ENCODE measurements at regions of chr9 and their contacts with region 1.

Region 1: DNA sequence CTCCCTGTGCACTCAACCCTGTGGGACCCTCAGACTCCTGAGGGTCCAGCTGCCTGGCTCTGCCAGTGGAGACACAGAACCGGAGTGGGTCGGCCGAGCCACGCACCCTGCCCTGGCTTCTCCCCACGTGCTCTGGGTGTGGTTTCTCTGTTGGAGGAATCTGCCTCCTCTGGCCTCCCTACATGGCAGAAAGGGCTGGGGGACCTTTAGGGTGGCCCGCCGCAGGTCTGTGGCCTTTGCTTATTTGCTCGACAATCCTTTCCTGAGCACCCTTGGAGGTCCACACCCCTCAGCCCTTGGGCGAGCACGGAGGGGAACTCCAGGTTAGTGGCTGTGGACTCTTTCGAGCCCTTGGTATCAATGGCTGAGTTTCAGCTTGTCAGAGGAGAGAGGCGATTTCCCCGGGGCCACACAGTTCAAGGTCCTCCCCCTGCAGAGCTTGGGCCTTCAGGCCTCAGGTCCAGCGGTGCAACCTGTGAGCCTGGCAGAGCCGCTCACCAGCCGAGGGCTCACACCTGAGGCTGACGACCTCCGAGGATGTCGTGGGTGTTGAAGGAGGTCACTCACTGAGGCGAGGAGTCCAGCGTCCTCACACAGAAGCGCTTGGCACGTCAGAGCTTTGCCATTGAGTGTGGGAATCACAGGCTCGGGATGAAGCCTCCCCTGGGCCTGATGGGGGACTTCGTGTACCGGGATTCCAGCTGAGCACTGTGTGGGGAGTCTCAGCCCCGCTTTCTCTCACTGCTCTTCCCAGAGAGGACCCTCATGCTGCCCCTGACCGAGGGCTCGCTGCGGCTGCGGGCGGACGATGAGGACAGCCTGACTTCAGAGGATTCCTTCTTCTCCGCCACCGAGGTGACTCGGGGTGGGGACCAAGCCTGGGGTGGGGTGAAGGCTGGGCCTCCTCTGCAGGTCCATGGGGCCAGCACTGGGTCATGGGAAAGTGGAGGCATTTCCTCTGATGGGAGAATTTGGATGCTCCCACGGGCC is 20.8 kb upstream of the DOLPP1 start:
- DNase-seq: no peak

Region 2: DNA sequence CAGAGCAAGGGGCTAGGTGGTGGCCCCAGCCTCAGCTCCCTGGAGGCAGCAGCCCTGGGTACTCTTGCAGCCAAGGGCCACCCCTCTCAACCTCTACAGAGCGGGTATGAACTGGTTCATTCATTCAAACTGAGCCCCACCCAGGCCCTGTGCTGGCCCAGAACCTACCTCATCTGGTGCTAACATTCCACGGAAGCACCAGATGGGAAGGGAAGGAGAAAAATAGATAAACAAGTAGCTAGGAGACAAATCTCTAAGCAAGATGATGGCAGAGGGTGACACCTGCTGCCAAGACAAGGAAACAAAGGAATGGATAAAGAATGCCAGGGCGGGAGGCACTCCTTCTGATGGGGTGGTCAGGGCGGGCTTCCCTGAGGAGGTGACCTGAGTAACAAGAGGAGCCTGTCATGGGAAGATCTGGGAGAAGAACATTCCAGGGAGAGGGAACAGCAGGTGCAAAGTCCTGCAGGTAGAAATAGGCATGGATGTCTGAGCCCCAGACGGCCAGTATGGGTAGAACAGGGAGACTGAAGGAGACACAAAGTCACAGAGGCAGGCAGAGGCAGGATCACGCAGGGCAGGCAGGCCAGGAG is 1149.4 kb before region 1 on chr9:
- intact Hi-C with region 1: loop called in 1 of 2 experiments (anchors 5 kb)
- DNase-seq: no peak

Region 3: GRCh38 chr9:128940271-128940921 is 119.7 kb before region 1 on chr9:
- intact Hi-C with region 1: no loop called
- DNase-seq: peak; percentile 81

Region 4: DNA sequence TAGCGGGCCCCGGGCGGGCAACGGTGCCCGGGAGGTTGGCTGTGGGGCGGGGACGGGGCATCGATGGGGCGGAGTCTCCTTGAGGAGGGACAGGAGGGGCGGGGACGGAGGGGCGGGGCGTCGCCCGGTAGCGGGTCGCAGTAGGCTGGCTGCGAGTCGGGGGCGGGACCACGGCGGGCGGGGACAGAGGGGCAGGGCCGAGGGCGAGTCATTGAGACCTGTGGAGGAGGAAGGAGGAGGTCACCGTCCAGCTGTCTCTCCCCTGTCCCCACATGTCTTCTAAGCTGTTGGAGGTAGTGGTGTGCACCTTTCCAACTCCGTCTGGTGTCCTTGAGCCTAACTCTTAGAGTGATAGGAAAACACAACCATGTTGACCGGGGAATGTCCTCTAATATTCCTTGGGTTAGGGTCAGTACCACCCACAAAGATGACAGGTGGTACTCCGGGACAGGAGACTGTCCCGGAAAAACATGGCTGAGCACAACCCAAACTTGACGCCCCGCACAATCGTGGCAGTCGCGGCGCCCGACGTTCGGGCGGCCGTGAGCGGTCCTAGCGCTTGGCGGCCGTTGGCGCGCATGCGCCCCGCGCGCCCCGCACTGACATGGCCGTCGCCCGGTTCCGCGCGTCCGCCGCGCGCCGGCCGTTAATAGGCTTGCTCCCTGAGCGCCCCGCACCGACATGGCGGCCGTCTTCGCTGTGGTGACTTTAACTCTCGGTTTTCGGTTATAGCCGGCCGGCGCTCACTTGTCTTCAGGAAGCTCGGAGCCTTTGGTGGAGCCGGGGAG is 50.8 kb after region 1 on chr9 and contains the starts of genes CRAT and PTPA:
- intact Hi-C with region 1: no loop called
- DNase-seq: peak; percentile 99
- total RNA-seq, gene CRAT: 53.8 to 59.5 TPM
- total RNA-seq, gene PTPA: 82.4 to 100 TPM